Cardiac septum (tissue), 1 donor: ENCODE measurements at regions of chr3 and their contacts with region 1.

Region 1: GRCh38 chr3:39288300-39288808 is 8.5 kb upstream of the CX3CR1 start:
- DNase-seq: peak; percentile 91

Region 2: GRCh38 chr3:39107388-39108199 is 180.8 kb before region 1 on chr3 and contains the starts of genes GORASP1 and TTC21A:
- intact Hi-C with region 1: loop called (anchors 1 kb)
- DNase-seq: peak; percentile 97
- total RNA-seq, gene GORASP1: 45.9 TPM
- total RNA-seq, gene TTC21A: 3.0 TPM

Region 3: DNA sequence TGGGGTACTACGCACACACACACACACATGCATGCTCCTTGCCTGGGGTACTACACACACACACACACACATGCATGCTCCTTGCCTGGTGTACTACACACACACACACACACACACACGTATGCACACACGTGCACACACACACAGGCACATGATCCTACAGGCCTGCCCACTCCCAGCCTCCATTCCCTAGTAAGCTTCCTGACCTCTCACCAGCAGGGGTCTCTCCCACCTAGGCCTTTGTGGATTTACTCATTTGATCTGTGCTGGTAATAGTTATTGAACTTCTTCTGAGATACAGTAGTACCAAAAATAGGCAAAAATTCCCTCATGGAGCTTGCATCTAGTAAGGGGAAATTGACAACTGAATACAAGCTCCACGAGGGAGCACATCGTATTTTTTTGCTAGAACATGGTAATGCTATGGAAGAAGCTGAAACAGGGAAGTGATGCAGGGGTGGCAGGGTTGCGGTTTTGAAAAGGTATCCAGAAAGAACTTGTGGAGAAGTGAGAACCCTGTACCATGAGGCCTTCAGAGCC is 161.8 kb before region 1 on chr3:
- intact Hi-C with region 1: loop called (anchors 1 kb)
- DNase-seq: peak; percentile 75

Region 4: GRCh38 chr3:39189959-39190269 is 98.4 kb before region 1 on chr3:
- intact Hi-C with region 1: loop called (anchors 5 kb)
- DNase-seq: no peak

Region 5: DNA sequence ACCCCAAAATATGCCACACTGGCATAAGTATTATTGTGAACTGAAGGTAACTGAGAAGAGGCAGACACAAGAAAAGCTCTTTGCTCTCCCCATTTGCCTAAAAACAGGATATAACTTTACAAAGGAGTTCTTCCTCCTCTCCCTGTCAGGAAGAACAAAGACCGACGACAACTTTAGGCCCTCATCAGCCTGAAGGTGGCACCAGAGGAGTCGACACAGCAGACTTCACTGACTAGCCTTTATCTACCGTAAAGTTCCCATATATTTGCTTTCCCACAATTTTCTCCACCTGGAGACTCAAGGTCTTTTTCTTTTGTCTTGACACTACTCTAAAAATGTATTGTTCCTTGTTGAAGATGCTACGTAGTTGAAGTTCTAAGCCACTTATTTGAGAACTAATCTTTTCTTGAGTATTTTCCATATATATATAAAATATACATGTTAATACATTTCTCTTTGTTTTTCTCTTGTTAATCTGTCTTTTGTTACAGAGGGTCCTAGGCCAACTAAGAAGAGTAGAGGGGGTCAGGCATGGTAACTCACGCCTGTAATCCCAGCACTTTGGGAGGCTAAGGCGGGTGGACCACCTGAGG is 79.8 kb before region 1 on chr3:
- intact Hi-C with region 1: loop called (anchors 2 kb)
- DNase-seq: peak; percentile 84